ENCODE measurements at regions of chr19 and their contacts with region 1.

Region 1: DNA sequence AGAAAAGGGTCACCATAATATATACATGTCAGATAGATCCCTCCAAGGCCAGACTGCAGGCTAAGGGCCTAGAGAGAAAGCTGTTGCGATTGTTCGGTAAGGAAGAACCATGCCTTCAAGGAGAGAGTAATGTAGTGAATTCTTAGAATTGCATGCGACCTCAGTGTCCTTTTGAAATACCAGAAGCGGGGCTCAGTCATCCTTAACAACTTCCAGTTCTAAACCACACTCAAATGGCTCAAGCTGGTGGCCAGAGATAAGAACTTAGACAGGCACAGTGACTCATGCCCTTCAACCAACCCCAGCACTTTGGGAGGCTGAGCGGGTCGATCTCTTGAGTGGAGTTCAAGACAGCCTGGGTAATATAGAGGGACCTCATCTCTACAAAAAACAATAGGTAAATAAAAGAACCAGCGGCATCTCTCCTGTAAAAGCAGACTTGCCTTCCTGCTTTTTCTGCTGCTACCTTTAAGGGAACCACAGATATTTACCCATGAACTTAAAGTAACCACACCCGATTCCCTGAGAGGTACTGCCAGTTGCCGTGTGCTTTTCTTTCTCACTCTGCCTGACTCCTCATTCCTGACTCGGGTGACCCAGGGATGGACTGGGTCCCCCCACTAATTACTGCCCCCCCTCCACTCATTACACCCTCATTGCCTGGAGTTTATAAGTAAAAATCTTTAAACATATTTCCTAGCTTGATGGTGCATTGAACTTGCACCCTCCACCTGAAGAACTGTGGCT is 15.4 kb upstream of the SIGLEC6 start:
- DNase-seq: no peak
- ATAC-seq: no peak
- H3K4me3 Mint-ChIP-seq: peak overlapping the region; percentile 42
- H3K27ac Mint-ChIP-seq: peak overlapping the region; percentile 82
- H3K4me1 Mint-ChIP-seq: peaks cover 92% of the 10 kb centered on the region
- H3K27me3 Mint-ChIP-seq: no peaks in the 10 kb centered on the region
- CTCF ChIP-seq: no peak

Region 2: DNA sequence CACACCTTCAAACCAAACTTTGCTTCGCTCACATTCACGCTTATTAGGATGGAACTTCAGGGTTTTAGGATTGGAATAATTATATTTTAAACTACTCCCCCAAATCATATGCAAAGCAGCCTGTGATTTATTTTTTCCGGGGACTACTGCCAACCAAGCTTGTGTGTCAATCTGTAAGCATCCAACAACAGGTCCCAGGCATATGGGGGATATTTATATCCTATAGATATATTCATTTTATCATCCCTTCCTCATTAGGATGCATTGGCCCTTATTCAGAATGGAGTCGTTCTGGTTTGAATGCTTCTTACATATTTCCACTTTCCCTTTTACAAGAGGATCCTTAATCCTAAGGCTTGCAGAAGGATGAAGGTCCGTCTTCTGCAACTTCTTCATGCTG is 147.6 kb before region 1 on chr19:
- CTCF ChIA-PET with region 1: no interaction called
- POLR2A ChIA-PET with region 1: no interaction called
- intact Hi-C with region 1: no loop called
- DNase-seq: no peak
- ATAC-seq: no peak
- H3K4me3 Mint-ChIP-seq: no peak overlapping the region
- H3K27ac Mint-ChIP-seq: no peak overlapping the region
- H3K4me1 Mint-ChIP-seq: peaks cover 22% of the 10 kb centered on the region
- H3K27me3 Mint-ChIP-seq: no peaks in the 10 kb centered on the region
- CTCF ChIP-seq: no peak

Region 3: GRCh38 chr19:51514866-51515481 is 31.8 kb before region 1 on chr19:
- CTCF ChIA-PET with region 1: interaction called, 19 read pairs
- POLR2A ChIA-PET with region 1: no interaction called
- intact Hi-C with region 1: loop called (anchors 5 kb)
- DNase-seq: no peak
- ATAC-seq: no peak
- H3K4me3 Mint-ChIP-seq: no peak overlapping the region
- H3K27ac Mint-ChIP-seq: no peak overlapping the region
- H3K4me1 Mint-ChIP-seq: peaks cover 7% of the 10 kb centered on the region
- H3K27me3 Mint-ChIP-seq: peaks cover 2% of the 10 kb centered on the region
- CTCF ChIP-seq: peak; percentile 72

Region 4: GRCh38 chr19:51621178-51621577 is 74.4 kb after region 1 on chr19:
- CTCF ChIA-PET with region 1: no interaction called
- POLR2A ChIA-PET with region 1: no interaction called
- intact Hi-C with region 1: no loop called
- DNase-seq: no peak
- ATAC-seq: peak; percentile 87
- H3K4me3 Mint-ChIP-seq: no peak overlapping the region
- H3K27ac Mint-ChIP-seq: peak overlapping the region; percentile 21
- H3K4me1 Mint-ChIP-seq: peaks cover 24% of the 10 kb centered on the region
- H3K27me3 Mint-ChIP-seq: no peaks in the 10 kb centered on the region
- CTCF ChIP-seq: no peak